ENCODE measurements at regions of chr1 and their contacts with region 1.

Region 1: GRCh38 chr1:67696708-67697107 is 11.7 kb downstream of the GADD45A start:
- DNase-seq: no peak
- ATAC-seq: no peak
- H3K4me3 ChIP-seq: no peak overlapping the region
- H3K27ac ChIP-seq: no peak overlapping the region
- H3K4me1 ChIP-seq: no peaks in the 10 kb centered on the region
- H3K27me3 ChIP-seq: no peaks in the 10 kb centered on the region
- CTCF ChIP-seq: no peak
- POLR2A ChIP-seq: no peak

Region 2: DNA sequence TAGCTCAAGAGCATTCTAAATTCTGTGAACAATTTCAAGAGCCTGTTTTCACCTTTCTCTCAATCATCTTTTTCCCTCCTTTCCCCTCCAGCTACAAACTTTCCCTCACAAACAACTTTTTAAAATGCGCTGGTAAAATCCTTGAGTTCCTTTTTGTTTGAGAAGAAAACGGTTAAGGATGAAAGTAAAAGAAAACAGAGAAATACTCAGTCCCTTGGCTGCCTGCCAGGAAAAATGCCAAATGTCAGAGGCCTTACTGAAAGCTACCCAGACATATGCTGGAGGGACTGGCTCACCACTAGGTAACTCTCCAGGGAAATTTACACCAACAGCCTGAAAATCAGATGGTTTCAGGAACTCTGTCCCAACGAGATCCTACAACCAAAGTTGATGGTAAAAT is 255.5 kb before region 1 on chr1:
- in situ Hi-C with region 1: no loop called
- intact Hi-C with region 1: no loop called
- DNase-seq: peak in 1 of 2 donors; percentile 10
- ATAC-seq: no peak
- H3K4me3 ChIP-seq: no peak overlapping the region
- H3K27ac ChIP-seq: peak overlapping the region in 1 of 4 donors; percentile 16
- H3K4me1 ChIP-seq: peaks cover 22 to 30% of the 10 kb centered on the region in 2 donors
- H3K27me3 ChIP-seq: no peaks in the 10 kb centered on the region
- CTCF ChIP-seq: no peak
- POLR2A ChIP-seq: no peak

Region 3: GRCh38 chr1:67741121-67741520 is 44.4 kb after region 1 on chr1:
- in situ Hi-C with region 1: loop called in 2 of 4 experiments (anchors 5 to 10 kb)
- intact Hi-C with region 1: no loop called
- DNase-seq: no peak
- ATAC-seq: no peak
- H3K4me3 ChIP-seq: no peak overlapping the region
- H3K27ac ChIP-seq: no peak overlapping the region
- H3K4me1 ChIP-seq: peaks cover 4 to 18% of the 10 kb centered on the region in 2 donors
- H3K27me3 ChIP-seq: no peaks in the 10 kb centered on the region
- CTCF ChIP-seq: no peak
- POLR2A ChIP-seq: no peak

Region 4: DNA sequence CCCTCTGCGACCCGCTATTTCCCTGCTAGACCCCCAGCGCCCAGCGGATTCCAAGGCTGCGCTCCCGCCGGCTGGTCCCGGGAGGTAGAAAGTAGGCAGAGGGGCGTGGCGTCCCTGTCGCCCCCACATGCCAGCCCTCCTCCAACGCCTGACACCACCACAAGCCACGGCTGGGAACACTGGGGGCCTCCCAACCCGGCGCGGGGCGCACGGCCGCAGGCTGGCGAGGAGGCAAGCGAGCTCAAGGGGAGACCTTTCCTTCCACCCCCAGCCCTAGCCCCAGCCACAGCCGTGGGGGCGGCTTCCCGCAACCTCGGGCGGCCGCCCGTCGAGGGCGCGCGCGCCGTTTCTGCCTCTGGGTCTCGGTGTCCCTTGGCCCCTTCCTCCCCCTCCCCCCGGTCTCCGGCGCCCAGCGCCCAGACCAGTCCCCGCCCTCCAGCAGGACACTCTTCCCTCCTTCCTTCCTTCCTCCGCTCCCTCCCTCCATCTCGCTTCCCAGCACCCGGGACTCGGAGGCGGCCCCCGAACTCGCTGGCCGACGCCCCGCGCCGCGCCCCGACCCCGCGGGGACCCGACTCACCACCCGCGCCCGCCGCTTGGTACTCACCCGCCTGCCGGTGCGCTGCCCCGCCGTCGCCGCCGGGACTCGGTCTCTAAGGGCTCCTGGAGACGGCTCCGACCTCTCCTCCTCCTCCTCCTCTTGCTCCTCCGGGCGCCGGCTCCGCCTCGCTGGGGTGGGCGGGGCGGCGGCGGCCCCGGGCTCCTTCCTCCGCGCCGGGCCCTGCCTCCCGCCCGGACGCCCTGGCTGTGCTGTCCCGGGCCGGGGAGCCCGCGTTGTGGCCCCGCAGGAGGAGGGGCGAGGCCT is 136.3 kb after region 1 on chr1 and contains the start of gene GNG12:
- in situ Hi-C with region 1: no loop called
- intact Hi-C with region 1: no loop called
- DNase-seq: peak; percentile 52 to 59
- ATAC-seq: peak; percentile 76 to 77
- H3K4me3 ChIP-seq: peak within 1 kb of the TSS; percentile 63 to 81 (median 77)
- H3K27ac ChIP-seq: peak within 1 kb of the TSS; percentile 77 to 86 (median 82)
- H3K4me1 ChIP-seq: peaks cover 19 to 20% of the 10 kb centered on the region in 2 donors
- H3K27me3 ChIP-seq: no peaks in the 10 kb centered on the region
- CTCF ChIP-seq: no peak
- POLR2A ChIP-seq: peak; percentile 21 to 50
- total RNA-seq, gene GNG12: 17.9 to 24.5 (median 22.1) TPM

Measured in gastrocnemius medialis (tissue), 4 donors.